ENCODE measurements at regions of chr2 and their contacts with region 1.

Region 1: GRCh38 chr2:19362755-19363473 is 4.5 kb upstream of the OSR1 start:
- DNase-seq: peak; percentile 84 to 86
- H3K4me3 ChIP-seq: peak overlapping the region; percentile 51 to 52
- H3K27ac ChIP-seq: peak overlapping the region; percentile 61 to 63
- H3K4me1 ChIP-seq: no peaks in the 10 kb centered on the region
- H3K27me3 ChIP-seq: no peaks in the 10 kb centered on the region
- CTCF ChIP-seq: peak; percentile 68 to 93 (median 86)
- POLR2A ChIP-seq: no peak

Region 2: GRCh38 chr2:18398833-18399232 is 964.1 kb before region 1 on chr2:
- intact Hi-C with region 1: loop called (anchors 10 kb)
- DNase-seq: no peak
- H3K4me3 ChIP-seq: no peak overlapping the region
- H3K27ac ChIP-seq: no peak overlapping the region
- H3K4me1 ChIP-seq: no peaks in the 10 kb centered on the region
- H3K27me3 ChIP-seq: no peaks in the 10 kb centered on the region
- CTCF ChIP-seq: no peak
- POLR2A ChIP-seq: no peak

Region 3: DNA sequence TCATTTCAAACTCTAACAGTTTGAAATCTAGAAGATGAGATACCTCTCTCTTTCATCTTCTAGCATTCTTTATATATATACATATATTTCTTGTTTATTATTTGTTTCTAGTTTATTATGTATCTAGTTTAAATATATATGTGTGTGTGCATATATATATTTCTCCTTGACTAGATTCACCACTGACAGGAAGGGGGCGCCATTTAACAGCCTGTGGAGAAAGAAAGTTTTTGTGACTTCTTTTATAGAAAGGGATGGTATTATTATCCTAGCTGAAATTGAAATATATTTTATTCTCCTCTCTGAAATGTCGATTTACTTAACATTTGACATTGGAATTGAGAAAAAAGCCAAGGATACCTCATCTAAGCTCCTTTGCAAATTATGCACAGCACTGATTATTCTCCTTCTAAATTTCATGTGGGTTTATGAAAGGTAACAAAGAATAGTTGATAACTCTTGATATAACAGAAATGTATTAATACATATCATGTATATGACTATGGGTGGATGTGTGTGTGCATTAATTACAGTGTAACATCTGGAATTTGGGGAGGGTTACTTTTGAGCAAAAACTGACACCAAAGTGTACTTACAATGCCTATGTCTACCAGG is 612.9 kb before region 1 on chr2:
- intact Hi-C with region 1: loop called (anchors 10 kb)
- DNase-seq: peak; percentile 51 to 73
- H3K4me3 ChIP-seq: no peak overlapping the region
- H3K27ac ChIP-seq: peak overlapping the region; percentile 54 to 56
- H3K4me1 ChIP-seq: no peaks in the 10 kb centered on the region
- H3K27me3 ChIP-seq: no peaks in the 10 kb centered on the region
- CTCF ChIP-seq: peak; percentile 69 to 79 (median 77)
- POLR2A ChIP-seq: no peak